ENCODE measurements at regions of chr1 and their contacts with region 1.

Region 1: GRCh38 chr1:160675641-160676410 is 29.0 kb upstream of the SLAMF1 start:
- DNase-seq: peak; percentile 83
- ATAC-seq: peak; percentile 81
- H3K4me3 ChIP-seq: no peak overlapping the region
- H3K4me3 Mint-ChIP-seq: peak overlapping the region; percentile 43
- H3K27ac ChIP-seq: peak overlapping the region in 1 of 2 donors; percentile 61
- H3K27ac Mint-ChIP-seq: peak overlapping the region; percentile 81
- H3K4me1 ChIP-seq: peaks cover 48 to 52% of the 10 kb centered on the region in 2 donors
- H3K4me1 Mint-ChIP-seq: peaks cover 16% of the 10 kb centered on the region
- H3K27me3 ChIP-seq: no peaks in the 10 kb centered on the region
- H3K27me3 Mint-ChIP-seq: no peaks in the 10 kb centered on the region
- CTCF ChIP-seq: peak; percentile 86

Region 2: GRCh38 chr1:160607011-160607671 is 68.7 kb before region 1 on chr1:
- CTCF ChIA-PET with region 1: interaction called, 16 read pairs
- POLR2A ChIA-PET with region 1: no interaction called
- intact Hi-C with region 1: no loop called
- DNase-seq: peak; percentile 88
- ATAC-seq: peak; percentile 94
- H3K4me3 ChIP-seq: no peak overlapping the region
- H3K4me3 Mint-ChIP-seq: peak overlapping the region; percentile 54
- H3K27ac ChIP-seq: peak overlapping the region; percentile 13 to 68
- H3K27ac Mint-ChIP-seq: peak overlapping the region; percentile 89
- H3K4me1 ChIP-seq: peaks cover 20 to 28% of the 10 kb centered on the region in 2 donors
- H3K4me1 Mint-ChIP-seq: peaks cover 32% of the 10 kb centered on the region
- H3K27me3 ChIP-seq: no peaks in the 10 kb centered on the region
- H3K27me3 Mint-ChIP-seq: no peaks in the 10 kb centered on the region
- CTCF ChIP-seq: peak; percentile 82

Region 3: GRCh38 chr1:160629286-160630210 is 46.3 kb before region 1 on chr1:
- CTCF ChIA-PET with region 1: interaction called, 76 read pairs
- POLR2A ChIA-PET with region 1: no interaction called
- intact Hi-C with region 1: no loop called
- DNase-seq: peak; percentile 61
- ATAC-seq: peak; percentile 50
- H3K4me3 ChIP-seq: no peak overlapping the region
- H3K4me3 Mint-ChIP-seq: peak overlapping the region; percentile 38
- H3K27ac ChIP-seq: peak overlapping the region; percentile 16 to 41
- H3K27ac Mint-ChIP-seq: peak overlapping the region; percentile 59
- H3K4me1 ChIP-seq: peaks cover 84 to 95% of the 10 kb centered on the region in 2 donors
- H3K4me1 Mint-ChIP-seq: peaks cover 92% of the 10 kb centered on the region
- H3K27me3 ChIP-seq: no peaks in the 10 kb centered on the region
- H3K27me3 Mint-ChIP-seq: no peaks in the 10 kb centered on the region
- CTCF ChIP-seq: no peak

Region 4: GRCh38 chr1:160646711-160647328 is 29.0 kb before region 1 on chr1 and contains the start of gene SLAMF1:
- CTCF ChIA-PET with region 1: interaction called, 35 read pairs
- POLR2A ChIA-PET with region 1: interaction called, 4 read pairs
- intact Hi-C with region 1: loop called (anchors 2 kb)
- DNase-seq: peak; percentile 72
- ATAC-seq: peak; percentile 70
- H3K4me3 ChIP-seq: peak within 1 kb of the TSS; percentile 56 to 86 (median 78)
- H3K4me3 Mint-ChIP-seq: peak within 1 kb of the TSS; percentile 93
- H3K27ac ChIP-seq: peak within 1 kb of the TSS; percentile 73 to 93
- H3K27ac Mint-ChIP-seq: peak within 1 kb of the TSS; percentile 91
- H3K4me1 ChIP-seq: peaks cover 71 to 85% of the 10 kb centered on the region in 2 donors
- H3K4me1 Mint-ChIP-seq: peaks cover 88% of the 10 kb centered on the region
- H3K27me3 ChIP-seq: no peaks in the 10 kb centered on the region
- H3K27me3 Mint-ChIP-seq: no peaks in the 10 kb centered on the region
- CTCF ChIP-seq: no peak
- total RNA-seq, gene SLAMF1: 42.3 and 45.6 TPM in 2 replicates

Region 5: GRCh38 chr1:160664573-160665051 is 11.2 kb before region 1 on chr1:
- CTCF ChIA-PET with region 1: interaction called, 23 read pairs
- POLR2A ChIA-PET with region 1: no interaction called
- intact Hi-C with region 1: loop called (anchors 1 kb)
- DNase-seq: peak; percentile 76
- ATAC-seq: peak; percentile 80
- H3K4me3 ChIP-seq: peak overlapping the region in 1 of 5 experiments; percentile 44
- H3K4me3 Mint-ChIP-seq: peak overlapping the region; percentile 71
- H3K27ac ChIP-seq: peak overlapping the region; percentile 48 to 57
- H3K27ac Mint-ChIP-seq: peak overlapping the region; percentile 85
- H3K4me1 ChIP-seq: peaks cover 44 to 46% of the 10 kb centered on the region in 2 donors
- H3K4me1 Mint-ChIP-seq: peaks cover 60% of the 10 kb centered on the region
- H3K27me3 ChIP-seq: no peaks in the 10 kb centered on the region
- H3K27me3 Mint-ChIP-seq: no peaks in the 10 kb centered on the region
- CTCF ChIP-seq: no peak

Region 6: GRCh38 chr1:160726498-160727315 is 50.9 kb after region 1 on chr1:
- CTCF ChIA-PET with region 1: interaction called, 80 read pairs
- POLR2A ChIA-PET with region 1: no interaction called
- intact Hi-C with region 1: loop called (anchors 1 kb)
- DNase-seq: peak; percentile 88
- ATAC-seq: peak; percentile 93
- H3K4me3 ChIP-seq: peak overlapping the region in 1 of 5 experiments; percentile 17
- H3K4me3 Mint-ChIP-seq: no peak overlapping the region
- H3K27ac ChIP-seq: no peak overlapping the region
- H3K27ac Mint-ChIP-seq: no peak overlapping the region
- H3K4me1 ChIP-seq: peaks cover 8 to 12% of the 10 kb centered on the region in 2 donors
- H3K4me1 Mint-ChIP-seq: peaks cover 10% of the 10 kb centered on the region
- H3K27me3 ChIP-seq: no peaks in the 10 kb centered on the region
- H3K27me3 Mint-ChIP-seq: no peaks in the 10 kb centered on the region
- CTCF ChIP-seq: peak; percentile 99

Region 7: DNA sequence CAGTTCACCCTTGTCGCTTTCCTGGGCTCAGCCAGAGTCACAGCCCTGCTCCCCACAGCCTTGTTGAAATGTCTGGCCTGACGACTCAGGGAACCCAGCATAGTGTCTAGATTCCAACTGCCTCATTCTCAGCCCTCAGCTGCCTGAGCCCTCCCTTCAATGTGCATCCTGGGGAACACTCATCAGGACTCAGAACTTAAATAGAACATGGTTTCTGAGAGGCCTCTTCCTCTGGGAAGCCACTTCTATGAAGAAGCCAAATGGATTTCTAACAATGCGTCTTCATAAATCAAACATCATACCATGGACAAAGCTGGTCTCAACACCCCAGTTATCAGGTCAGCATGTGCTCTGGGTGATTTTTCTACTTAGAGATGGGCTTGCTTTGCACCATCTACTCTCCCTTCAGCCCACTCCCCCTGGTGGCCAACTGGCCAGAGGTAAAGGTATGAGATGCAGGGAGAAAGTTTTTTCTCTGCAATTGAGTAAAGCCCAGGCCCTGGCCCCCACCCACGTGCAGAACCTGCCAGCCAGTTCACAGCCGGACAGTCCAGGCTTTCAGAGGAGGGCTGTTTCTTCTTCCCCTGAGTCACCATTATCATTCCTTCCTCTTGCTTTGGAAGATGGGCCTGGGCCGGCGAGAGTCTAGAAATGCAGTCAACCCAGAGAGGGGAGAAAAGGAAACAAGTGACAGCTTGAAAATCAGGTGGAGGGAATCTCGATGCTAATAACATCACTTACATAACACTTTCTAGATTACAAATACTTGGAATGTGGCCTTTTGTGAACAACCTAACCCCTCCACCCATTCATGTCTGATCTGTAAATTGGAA is 154.7 kb after region 1 on chr1:
- CTCF ChIA-PET with region 1: interaction called, 11 read pairs
- POLR2A ChIA-PET with region 1: no interaction called
- intact Hi-C with region 1: loop called (anchors 1 kb)
- DNase-seq: peak; percentile 84
- ATAC-seq: peak; percentile 74
- H3K4me3 ChIP-seq: no peak overlapping the region
- H3K4me3 Mint-ChIP-seq: no peak overlapping the region
- H3K27ac ChIP-seq: peak overlapping the region in 1 of 2 donors; percentile 14
- H3K27ac Mint-ChIP-seq: peak overlapping the region; percentile 77
- H3K4me1 ChIP-seq: no peaks in the 10 kb centered on the region
- H3K4me1 Mint-ChIP-seq: peaks cover 10% of the 10 kb centered on the region
- H3K27me3 ChIP-seq: no peaks in the 10 kb centered on the region
- H3K27me3 Mint-ChIP-seq: no peaks in the 10 kb centered on the region
- CTCF ChIP-seq: peak; percentile 83

Region 8: GRCh38 chr1:160862203-160863060 is 186.6 kb after region 1 on chr1 and contains the start of gene CD244:
- CTCF ChIA-PET with region 1: no interaction called
- POLR2A ChIA-PET with region 1: no interaction called
- intact Hi-C with region 1: no loop called
- DNase-seq: no peak
- ATAC-seq: peak; percentile 10
- H3K4me3 ChIP-seq: no peak within 1 kb of the TSS
- H3K4me3 Mint-ChIP-seq: peak within 1 kb of the TSS; percentile 39
- H3K27ac ChIP-seq: no peak within 1 kb of the TSS
- H3K27ac Mint-ChIP-seq: no peak within 1 kb of the TSS
- H3K4me1 ChIP-seq: peaks cover 15 to 23% of the 10 kb centered on the region in 2 donors
- H3K4me1 Mint-ChIP-seq: peaks cover 21% of the 10 kb centered on the region
- H3K27me3 ChIP-seq: no peaks in the 10 kb centered on the region
- H3K27me3 Mint-ChIP-seq: peaks cover 14% of the 10 kb centered on the region
- CTCF ChIP-seq: no peak
- total RNA-seq, gene CD244: 0.15 TPM in 1 of 2 replicates, not detected in the other

Measured in B cell (primary cell).